Right cardiac atrium (tissue), 5 donors: ENCODE measurements at regions of chr1 and their contacts with region 1.

Region 1: GRCh38 chr1:38608202-38608864 is 251.2 kb downstream of the RRAGC start:
- DNase-seq: peak; percentile 21 to 58 (median 52)
- ATAC-seq: peak in 1 of 2 donors; percentile 55
- H3K4me3 ChIP-seq: no peak overlapping the region
- H3K27ac ChIP-seq: no peak overlapping the region
- H3K4me1 ChIP-seq: no peaks in the 10 kb centered on the region
- H3K27me3 ChIP-seq: no peaks in the 10 kb centered on the region

Region 2: GRCh38 chr1:38818175-38818976 is 210.0 kb after region 1 on chr1:
- intact Hi-C with region 1: loop called in 2 of 4 experiments (anchors 5 to 10 kb)
- DNase-seq: peak; percentile 25 to 79 (median 76)
- ATAC-seq: peak; percentile 64 to 82
- H3K4me3 ChIP-seq: peak overlapping the region; percentile 32
- H3K27ac ChIP-seq: no peak overlapping the region
- H3K4me1 ChIP-seq: no peaks in the 10 kb centered on the region
- H3K27me3 ChIP-seq: no peaks in the 10 kb centered on the region

Region 3: GRCh38 chr1:38834937-38835827 is 226.8 kb after region 1 on chr1:
- intact Hi-C with region 1: loop called in 1 of 4 experiments (anchors 5 kb)
- DNase-seq: no peak
- ATAC-seq: peak; percentile 78 to 85
- H3K4me3 ChIP-seq: no peak overlapping the region
- H3K27ac ChIP-seq: no peak overlapping the region
- H3K4me1 ChIP-seq: no peaks in the 10 kb centered on the region
- H3K27me3 ChIP-seq: no peaks in the 10 kb centered on the region

Region 4: GRCh38 chr1:39754906-39755504 is 1146.7 kb after region 1 on chr1:
- intact Hi-C with region 1: no loop called
- DNase-seq: no peak
- ATAC-seq: peak in 1 of 2 donors; percentile 25
- H3K4me3 ChIP-seq: no peak overlapping the region
- H3K27ac ChIP-seq: no peak overlapping the region
- H3K4me1 ChIP-seq: no peaks in the 10 kb centered on the region
- H3K27me3 ChIP-seq: no peaks in the 10 kb centered on the region